Natural killer cell (primary cell): ENCODE measurements at regions of chr9 and their contacts with region 1.

Region 1: GRCh38 chr9:81848472-81848871 is 79.8 kb upstream of the SPATA31D4 start:
- DNase-seq: no peak
- ATAC-seq: no peak
- H3K4me3 ChIP-seq: no peak overlapping the region
- H3K4me3 Mint-ChIP-seq: no peak overlapping the region
- H3K27ac ChIP-seq: no peak overlapping the region
- H3K27ac Mint-ChIP-seq: no peak overlapping the region
- H3K4me1 ChIP-seq: no peaks in the 10 kb centered on the region
- H3K4me1 Mint-ChIP-seq: no peaks in the 10 kb centered on the region
- H3K27me3 ChIP-seq: no peaks in the 10 kb centered on the region
- H3K27me3 Mint-ChIP-seq: no peaks in the 10 kb centered on the region
- CTCF ChIP-seq: peak; percentile 33

Region 2: GRCh38 chr9:81529556-81530195 is 318.8 kb before region 1 on chr9:
- intact Hi-C with region 1: loop called (anchors 10 kb)
- DNase-seq: no peak
- ATAC-seq: no peak
- H3K4me3 ChIP-seq: no peak overlapping the region
- H3K4me3 Mint-ChIP-seq: no peak overlapping the region
- H3K27ac ChIP-seq: no peak overlapping the region
- H3K27ac Mint-ChIP-seq: no peak overlapping the region
- H3K4me1 ChIP-seq: no peaks in the 10 kb centered on the region
- H3K4me1 Mint-ChIP-seq: peaks cover 0 to 6% of the 10 kb centered on the region in 2 donors
- H3K27me3 ChIP-seq: no peaks in the 10 kb centered on the region
- H3K27me3 Mint-ChIP-seq: peaks cover 21 to 23% of the 10 kb centered on the region in 2 donors
- CTCF ChIP-seq: no peak

Region 3: GRCh38 chr9:81979196-81979595 is 130.7 kb after region 1 on chr9:
- intact Hi-C with region 1: no loop called
- DNase-seq: no peak
- ATAC-seq: no peak
- H3K4me3 ChIP-seq: no peak overlapping the region
- H3K4me3 Mint-ChIP-seq: no peak overlapping the region
- H3K27ac ChIP-seq: no peak overlapping the region
- H3K27ac Mint-ChIP-seq: no peak overlapping the region
- H3K4me1 ChIP-seq: no peaks in the 10 kb centered on the region
- H3K4me1 Mint-ChIP-seq: no peaks in the 10 kb centered on the region
- H3K27me3 ChIP-seq: no peaks in the 10 kb centered on the region
- H3K27me3 Mint-ChIP-seq: no peaks in the 10 kb centered on the region
- CTCF ChIP-seq: no peak